Activated CD4-positive, alpha-beta T cell treated with anti-CD3 and anti-CD28 coated beads for 36 hours (primary cell): ENCODE measurements at regions of chr20 and their contacts with region 1.

Region 1: GRCh38 chr20:38057351-38057972 is 23.9 kb downstream of the RPRD1B start:
- DNase-seq: peak; percentile 87
- ATAC-seq: peak; percentile 92
- H3K4me3 Mint-ChIP-seq: peak overlapping the region; percentile 29
- H3K27ac Mint-ChIP-seq: peak overlapping the region; percentile 86
- H3K4me1 Mint-ChIP-seq: peaks cover 34% of the 10 kb centered on the region
- H3K27me3 Mint-ChIP-seq: no peaks in the 10 kb centered on the region

Region 2: DNA sequence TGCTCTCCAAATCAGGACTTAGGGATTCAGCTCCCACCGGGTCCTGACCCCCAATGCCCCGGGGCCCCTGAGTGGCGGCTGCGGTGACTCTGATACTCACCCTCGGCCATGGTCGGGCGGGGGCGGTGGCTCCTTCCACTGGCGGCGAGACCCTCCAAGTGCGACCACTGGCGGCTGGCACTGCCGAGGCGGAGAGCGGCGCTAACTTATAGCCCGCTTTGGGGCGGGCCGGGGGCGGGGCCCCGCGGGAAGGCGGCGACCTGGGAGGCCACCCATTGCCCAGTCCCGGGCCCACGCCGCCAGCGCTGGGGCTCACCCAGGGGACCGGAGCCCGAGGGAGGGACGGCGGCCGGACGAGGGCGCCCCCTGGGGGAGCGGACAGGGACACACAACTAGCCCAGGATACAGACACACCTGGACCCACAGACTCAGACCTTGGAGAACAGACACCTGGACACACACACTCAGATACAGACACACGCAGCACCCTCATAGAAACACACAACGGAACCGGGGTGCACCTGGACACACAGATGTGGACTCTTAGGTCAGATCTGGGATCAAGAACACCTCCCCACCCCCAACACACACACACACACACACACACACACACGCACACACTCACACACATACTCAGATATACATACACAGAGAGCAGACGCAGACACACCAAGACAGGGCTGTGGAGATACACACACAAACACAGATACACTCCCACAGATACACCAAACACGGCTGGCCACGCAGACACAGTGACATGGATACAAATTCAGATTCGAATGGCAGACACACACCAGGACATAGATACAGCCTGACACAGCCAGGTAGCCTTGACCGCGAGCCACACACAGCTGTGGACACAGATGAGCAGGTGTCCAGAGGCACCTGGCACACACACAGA is 107.9 kb after region 1 on chr20 and contains the start of gene TGM2:
- CTCF ChIA-PET with region 1: interaction called, 5 read pairs
- POLR2A ChIA-PET with region 1: no interaction called
- intact Hi-C with region 1: loop called (anchors 1 kb)
- DNase-seq: peak; percentile 68
- ATAC-seq: peak; percentile 77
- H3K4me3 Mint-ChIP-seq: no peak within 1 kb of the TSS
- H3K27ac Mint-ChIP-seq: no peak within 1 kb of the TSS
- H3K4me1 Mint-ChIP-seq: peaks cover 8% of the 10 kb centered on the region
- H3K27me3 Mint-ChIP-seq: peaks cover 20% of the 10 kb centered on the region
- total RNA-seq, gene TGM2: 0.04 to 0.09 TPM